Ovary (tissue), 10 donors: ENCODE measurements at regions of chr2 and their contacts with region 1.

Region 1: DNA sequence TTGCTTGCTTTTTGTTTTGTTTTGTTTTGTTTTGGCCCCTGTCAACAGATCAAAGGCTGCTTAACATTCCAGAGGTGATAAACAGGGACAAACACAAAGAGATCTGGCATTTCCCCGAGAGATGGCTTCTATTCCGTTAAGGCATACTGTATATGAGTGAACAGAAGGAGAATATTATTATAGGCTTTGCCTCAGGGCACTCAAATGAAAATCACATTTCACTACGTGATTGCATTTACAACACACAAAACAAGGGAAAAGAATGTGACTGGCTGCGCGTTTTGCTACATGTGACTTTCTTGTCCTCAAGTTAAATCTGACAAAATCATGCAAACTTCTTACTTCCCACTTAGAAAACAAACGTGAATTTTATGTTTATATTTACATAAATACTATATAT is 1037.9 kb upstream of the DDX18 start:
- DNase-seq: no peak
- H3K4me3 ChIP-seq: no peak overlapping the region
- H3K27ac ChIP-seq: no peak overlapping the region
- H3K4me1 ChIP-seq: no peaks in the 10 kb centered on the region
- H3K27me3 ChIP-seq: no peaks in the 10 kb centered on the region
- CTCF ChIP-seq: no peak
- EP300 ChIP-seq: no peak
- POLR2A ChIP-seq: no peak

Region 2: GRCh38 chr2:116669782-116670181 is 106.8 kb before region 1 on chr2:
- intact Hi-C with region 1: loop called in 1 of 4 experiments (anchors 5 kb)
- DNase-seq: no peak
- H3K4me3 ChIP-seq: no peak overlapping the region
- H3K27ac ChIP-seq: no peak overlapping the region
- H3K4me1 ChIP-seq: no peaks in the 10 kb centered on the region
- H3K27me3 ChIP-seq: no peaks in the 10 kb centered on the region
- CTCF ChIP-seq: no peak
- EP300 ChIP-seq: no peak
- POLR2A ChIP-seq: no peak

Region 3: GRCh38 chr2:116879650-116880160 is 103.1 kb after region 1 on chr2:
- intact Hi-C with region 1: no loop called
- DNase-seq: no peak
- H3K4me3 ChIP-seq: no peak overlapping the region
- H3K27ac ChIP-seq: no peak overlapping the region
- H3K4me1 ChIP-seq: no peaks in the 10 kb centered on the region
- H3K27me3 ChIP-seq: no peaks in the 10 kb centered on the region
- CTCF ChIP-seq: no peak
- EP300 ChIP-seq: no peak
- POLR2A ChIP-seq: no peak

Region 4: DNA sequence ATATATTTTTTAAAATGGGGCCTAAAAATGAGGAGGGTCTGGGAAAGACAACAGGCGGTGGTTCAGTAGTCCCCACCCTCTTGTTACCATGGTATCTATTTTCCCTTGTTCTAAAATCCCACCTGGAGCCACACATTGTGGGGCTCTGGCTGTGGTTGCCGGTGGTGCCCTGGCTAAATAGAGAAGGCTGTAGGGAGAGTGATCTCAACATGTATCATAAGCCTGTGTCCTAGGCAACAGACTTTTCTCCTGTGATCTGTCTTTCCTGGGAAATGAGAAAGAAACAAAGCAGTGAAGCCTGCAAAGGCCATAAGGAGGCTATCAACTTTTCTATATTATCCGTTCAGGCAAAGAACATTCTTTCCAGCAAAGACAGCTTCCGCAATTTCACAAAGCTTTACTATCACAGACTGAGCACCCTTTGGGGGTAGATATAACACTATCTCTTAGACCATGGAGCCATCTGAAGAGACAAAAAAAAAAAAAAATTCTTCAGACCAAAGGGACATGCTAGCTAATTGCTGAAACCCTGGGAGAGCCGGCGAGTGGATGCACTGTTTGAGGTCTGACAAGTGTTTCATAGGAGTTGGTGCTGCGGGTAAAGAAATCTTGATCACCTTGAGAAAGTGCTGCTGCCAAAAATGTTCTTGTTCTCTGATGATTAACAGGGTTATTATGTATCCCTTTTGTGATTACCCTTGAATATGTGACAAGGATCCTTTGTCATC is 158.7 kb after region 1 on chr2:
- intact Hi-C with region 1: no loop called
- DNase-seq: no peak
- H3K4me3 ChIP-seq: no peak overlapping the region
- H3K27ac ChIP-seq: no peak overlapping the region
- H3K4me1 ChIP-seq: no peaks in the 10 kb centered on the region
- H3K27me3 ChIP-seq: no peaks in the 10 kb centered on the region
- CTCF ChIP-seq: no peak
- EP300 ChIP-seq: no peak
- POLR2A ChIP-seq: no peak

Region 5: GRCh38 chr2:118696786-118697465 is 1920.4 kb after region 1 on chr2:
- intact Hi-C with region 1: no loop called
- DNase-seq: no peak
- H3K4me3 ChIP-seq: no peak overlapping the region
- H3K27ac ChIP-seq: no peak overlapping the region
- H3K4me1 ChIP-seq: no peaks in the 10 kb centered on the region
- H3K27me3 ChIP-seq: no peaks in the 10 kb centered on the region
- CTCF ChIP-seq: no peak
- EP300 ChIP-seq: no peak
- POLR2A ChIP-seq: no peak